ENCODE measurements at regions of chr3 and their contacts with region 1.

Region 1: DNA sequence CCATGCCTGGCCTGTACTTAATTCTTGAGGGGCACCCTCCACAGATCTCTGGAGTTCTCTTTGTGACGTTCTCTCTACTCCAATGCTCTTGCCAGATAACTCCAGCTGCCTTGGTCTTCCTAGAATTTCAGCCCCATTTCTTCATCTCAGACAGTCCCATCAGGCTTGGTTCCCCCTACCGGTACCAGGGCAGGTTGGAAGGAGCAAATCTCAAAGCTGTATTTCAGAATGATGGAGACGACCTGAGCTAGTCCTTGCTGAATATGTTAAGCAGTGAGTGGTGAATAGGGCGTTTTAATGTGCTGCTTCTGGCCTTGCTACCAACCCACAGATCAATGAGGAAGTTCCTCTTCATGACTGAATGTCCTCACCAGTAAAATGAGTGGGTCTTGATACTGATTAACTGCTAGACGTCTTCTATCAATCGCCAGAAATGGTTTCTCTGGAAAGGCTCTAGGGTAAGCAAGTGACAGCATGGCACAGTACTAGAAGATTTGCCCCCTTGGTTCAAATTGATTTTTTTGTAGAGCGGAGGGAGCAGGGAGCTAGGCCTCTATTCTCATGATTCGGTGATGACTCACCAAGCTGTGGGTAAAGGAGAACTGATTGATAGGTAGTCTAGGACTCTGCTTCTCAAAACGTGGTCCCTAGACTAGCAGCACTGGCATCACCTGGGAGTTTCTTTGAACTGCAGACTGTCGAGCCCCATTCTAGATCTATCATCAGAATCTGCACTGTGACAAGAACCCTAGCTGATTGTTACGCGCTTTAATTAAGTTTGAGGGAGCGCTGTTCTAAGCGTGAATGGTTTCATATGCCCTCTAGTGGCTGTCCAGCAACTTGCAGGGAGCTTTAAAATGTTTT is 67.8 kb downstream of the UBP1 start:
- DNase-seq: no peak
- ATAC-seq: peak; percentile 79
- H3K4me3 ChIP-seq: no peak overlapping the region
- H3K27ac ChIP-seq: no peak overlapping the region
- H3K4me1 ChIP-seq: no peaks in the 10 kb centered on the region
- H3K27me3 ChIP-seq: no peaks in the 10 kb centered on the region

Region 2: DNA sequence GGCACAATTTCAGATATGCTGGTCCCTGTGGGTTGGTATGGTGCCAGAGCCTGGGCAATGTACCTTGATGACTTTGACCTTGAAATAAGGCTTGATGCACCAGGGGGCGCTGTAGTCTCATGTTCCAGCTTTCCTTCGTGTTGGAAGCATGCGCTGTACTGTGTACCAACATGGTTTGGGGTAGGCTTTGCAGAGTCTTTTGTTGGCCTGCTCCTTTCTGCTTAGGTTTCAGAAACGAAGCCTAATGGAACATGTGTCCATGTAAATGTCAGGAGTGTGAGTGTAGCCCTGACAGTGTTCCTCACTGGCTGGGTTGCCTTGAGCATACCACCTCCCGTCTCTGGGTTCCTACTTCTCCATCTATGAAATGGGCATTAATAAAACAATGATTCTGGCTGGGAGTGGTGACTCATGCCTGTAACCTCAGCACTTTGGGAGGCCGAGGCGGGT is 424.6 kb before region 1 on chr3:
- intact Hi-C with region 1: loop called (anchors 5 kb)
- DNase-seq: peak; percentile 88 to 92
- ATAC-seq: peak; percentile 82
- H3K4me3 ChIP-seq: no peak overlapping the region
- H3K27ac ChIP-seq: no peak overlapping the region
- H3K4me1 ChIP-seq: no peaks in the 10 kb centered on the region
- H3K27me3 ChIP-seq: no peaks in the 10 kb centered on the region

Region 3: GRCh38 chr3:33131331-33132018 is 241.0 kb before region 1 on chr3:
- intact Hi-C with region 1: loop called (anchors 2 to 5 kb)
- DNase-seq: no peak
- ATAC-seq: peak; percentile 84
- H3K4me3 ChIP-seq: no peak overlapping the region
- H3K27ac ChIP-seq: peak overlapping the region in 1 of 2 donors; percentile 77
- H3K4me1 ChIP-seq: peaks cover 0 to 2% of the 10 kb centered on the region in 2 donors
- H3K27me3 ChIP-seq: no peaks in the 10 kb centered on the region

Region 4: DNA sequence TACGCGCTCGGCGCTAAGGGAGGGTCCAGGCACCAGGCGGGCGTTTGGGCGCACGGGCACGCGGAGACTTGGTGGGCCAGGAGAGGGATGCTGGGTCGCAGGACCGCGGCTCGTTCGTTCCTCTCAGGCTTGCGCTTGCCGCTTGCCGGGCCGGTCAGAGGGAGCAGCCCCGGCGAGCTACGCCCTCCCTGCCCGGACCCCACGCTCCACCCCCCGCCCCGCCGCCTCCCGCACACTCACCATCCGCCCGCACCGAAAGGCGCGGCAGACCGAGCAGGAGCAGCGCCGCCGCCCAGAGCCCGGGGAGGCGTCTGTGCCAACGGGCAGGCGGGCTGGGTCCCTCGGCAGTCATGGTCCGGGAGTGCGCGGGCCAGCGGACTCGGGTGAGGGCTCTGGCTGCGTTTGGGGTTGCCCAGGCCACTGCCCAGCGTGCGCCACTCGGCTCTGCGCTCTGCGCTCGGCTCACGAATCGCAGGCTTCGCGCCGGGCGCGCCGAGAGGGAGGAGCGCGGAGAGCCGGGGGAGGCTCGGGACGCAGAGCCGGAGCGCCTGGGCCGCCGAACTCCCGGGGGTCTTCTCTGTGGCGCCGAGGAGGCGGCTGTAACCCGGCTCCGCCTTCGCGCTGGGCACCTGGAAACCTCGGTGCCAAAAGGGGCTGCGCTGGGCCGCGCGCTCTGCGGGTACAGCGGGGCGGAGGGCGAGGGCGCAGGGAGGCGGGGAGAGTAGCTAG is 153.8 kb before region 1 on chr3 and contains the start of gene SUSD5:
- intact Hi-C with region 1: loop called (anchors 5 to 10 kb)
- DNase-seq: peak; percentile 62 to 85
- ATAC-seq: peak; percentile 88
- H3K4me3 ChIP-seq: peak within 1 kb of the TSS; percentile 93 to 94
- H3K27ac ChIP-seq: peak within 1 kb of the TSS; percentile 77 to 97
- H3K4me1 ChIP-seq: no peaks in the 10 kb centered on the region
- H3K27me3 ChIP-seq: no peaks in the 10 kb centered on the region
- total RNA-seq, gene SUSD5: 132 to 230 TPM